A549 (cell line): ENCODE measurements at regions of chr14 and their contacts with region 1.

Region 1: DNA sequence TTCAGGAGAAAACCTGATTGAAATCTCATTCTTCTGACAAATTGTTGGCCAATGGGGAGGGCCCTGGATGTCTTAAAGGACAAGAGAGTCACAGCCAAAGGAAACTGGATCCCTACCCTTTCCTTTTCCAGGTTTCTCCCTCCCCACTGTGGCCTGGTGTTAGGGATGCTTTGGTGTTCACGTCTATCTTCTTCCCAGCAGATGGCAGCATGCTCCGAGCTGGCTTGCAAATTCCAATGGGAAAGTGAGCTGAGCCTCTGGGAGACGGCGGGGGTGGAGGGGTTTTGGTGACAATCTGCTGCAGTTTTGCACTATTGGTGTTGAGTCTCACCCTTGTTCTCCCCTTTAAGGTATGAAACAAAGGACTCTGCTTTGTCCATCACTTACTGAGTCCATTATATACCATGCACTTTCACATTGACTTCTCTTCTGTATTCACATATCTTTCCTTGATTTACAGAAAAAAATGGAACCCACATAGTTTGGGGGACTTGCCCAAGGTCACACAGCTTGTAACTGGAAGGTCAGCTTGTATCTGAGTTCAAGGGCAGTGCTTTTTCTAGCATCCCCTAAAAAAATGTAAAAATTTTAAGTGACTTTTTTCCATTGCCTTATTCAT is 39.3 kb downstream of the CCDC177 start:
- DNase-seq: peak; percentile 58 to 83
- ATAC-seq: peak; percentile 91 to 94
- H3K4me3 ChIP-seq: no peak overlapping the region
- H3K27ac ChIP-seq: no peak overlapping the region
- H3K4me1 ChIP-seq: no peaks in the 10 kb centered on the region
- CTCF ChIP-seq: peak; percentile 80
- EP300 ChIP-seq: no peak
- POLR2A ChIP-seq: no peak
- RAD21 ChIP-seq: peak; percentile 70 to 76

Region 2: DNA sequence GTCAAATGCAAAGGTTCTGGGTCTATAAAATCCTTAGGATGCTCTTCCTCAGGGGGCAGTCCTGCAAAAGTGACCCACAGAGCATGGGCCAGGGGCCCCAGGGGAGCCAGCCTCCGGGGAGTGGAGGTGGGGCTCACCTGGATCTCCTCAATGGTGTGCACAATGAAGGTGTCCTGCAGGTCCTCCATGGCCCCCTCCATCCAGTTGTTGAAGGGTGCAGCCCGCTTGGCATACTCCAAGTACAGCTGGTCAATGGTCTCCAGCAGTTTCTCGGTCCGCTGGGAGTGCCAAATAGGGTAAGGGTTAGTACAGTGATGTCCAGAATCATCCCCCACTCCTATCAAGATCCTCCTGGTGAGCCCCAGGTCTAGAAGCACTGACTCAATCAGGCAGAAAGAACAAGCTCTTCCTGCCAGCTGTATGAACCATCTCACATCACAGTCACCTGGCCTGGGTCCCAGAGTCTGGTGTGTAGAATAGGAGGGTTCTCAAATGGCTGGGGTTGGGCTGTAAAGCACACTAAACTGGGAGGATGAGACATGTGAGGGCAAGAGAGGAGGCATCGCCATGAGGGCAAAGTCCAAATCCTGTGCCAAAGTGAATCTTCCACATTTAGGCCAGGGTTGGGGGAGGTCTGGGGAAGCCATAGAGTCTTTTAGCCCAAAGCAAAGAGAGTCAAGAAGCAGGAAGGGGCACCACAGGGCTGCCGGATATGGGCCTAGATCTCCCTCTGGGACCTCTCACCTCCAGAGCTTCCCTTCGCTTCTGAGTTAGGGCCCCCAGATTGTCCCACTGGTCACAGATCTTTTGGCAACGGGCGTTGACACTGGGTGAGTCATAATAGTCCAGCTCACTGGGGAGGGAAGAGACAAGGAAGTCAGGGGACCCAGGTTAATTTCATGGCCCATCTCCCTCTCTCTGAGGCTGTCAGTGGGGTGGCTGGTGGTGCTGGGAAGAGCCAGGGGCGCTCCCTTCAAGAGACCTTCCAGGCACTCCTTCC is 651.0 kb before region 1 on chr14:
- CTCF ChIA-PET with region 1: no interaction called
- POLR2A ChIA-PET with region 1: no interaction called
- DNase-seq: peak; percentile 79 to 87
- ATAC-seq: peak; percentile 87 to 88
- H3K4me3 ChIP-seq: no peak overlapping the region; the same call in 2 of the 3 replicates
- H3K27ac ChIP-seq: peak overlapping the region; percentile 87 to 90
- H3K4me1 ChIP-seq: peaks cover 34% of the 10 kb centered on the region
- CTCF ChIP-seq: no peak
- EP300 ChIP-seq: peak in 1 of 2 experiments; percentile 32; a peak in 1 of 5 replicates
- POLR2A ChIP-seq: no peak
- RAD21 ChIP-seq: peak; percentile 1 to 11; a peak in 1 of 5 replicates

Region 3: DNA sequence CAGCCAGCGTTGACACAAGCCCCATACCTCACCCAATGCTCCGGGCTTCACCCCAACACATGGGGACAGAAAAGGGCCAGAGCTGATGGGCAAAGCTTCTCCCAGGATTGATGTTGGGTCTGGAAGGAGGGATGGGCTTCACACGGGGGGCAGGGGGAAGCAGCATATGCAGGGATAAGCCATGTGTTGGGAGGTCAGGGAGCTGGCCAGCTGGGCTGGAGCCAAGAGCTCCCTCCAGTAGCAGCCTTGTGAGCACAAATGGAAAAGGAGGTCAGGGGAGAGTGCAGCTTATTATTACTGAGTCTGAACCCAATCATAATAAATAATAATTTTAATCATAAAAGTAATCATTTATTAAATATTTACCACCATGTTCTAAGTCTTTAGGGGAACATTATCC is 41.5 kb before region 1 on chr14:
- CTCF ChIA-PET with region 1: no interaction called
- POLR2A ChIA-PET with region 1: no interaction called
- DNase-seq: no peak
- ATAC-seq: no peak
- H3K4me3 ChIP-seq: no peak overlapping the region
- H3K27ac ChIP-seq: no peak overlapping the region
- H3K4me1 ChIP-seq: no peaks in the 10 kb centered on the region
- CTCF ChIP-seq: no peak
- EP300 ChIP-seq: no peak
- POLR2A ChIP-seq: no peak
- RAD21 ChIP-seq: no peak

Region 4: DNA sequence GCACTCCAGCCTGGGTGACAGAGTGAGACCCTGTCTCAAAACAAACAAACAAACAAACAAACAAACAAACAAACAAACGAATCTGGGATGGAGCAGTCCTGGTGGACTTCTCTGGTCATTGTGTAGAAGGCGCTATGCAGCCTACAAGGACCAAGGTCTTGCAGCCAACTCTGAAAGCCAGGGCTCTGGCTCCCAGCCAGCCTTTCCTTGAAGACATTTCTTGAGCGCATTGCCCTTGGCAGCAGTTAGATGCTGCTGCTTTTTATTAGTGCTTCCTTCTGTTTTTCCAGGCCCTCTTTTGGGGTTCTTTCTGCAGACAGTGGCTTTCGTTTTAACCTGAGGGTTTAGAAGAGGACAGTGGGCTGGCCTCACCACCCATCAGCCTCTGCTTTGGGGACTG is 19.2 kb after region 1 on chr14:
- CTCF ChIA-PET with region 1: interaction called, 10 read pairs
- POLR2A ChIA-PET with region 1: no interaction called
- DNase-seq: no peak
- ATAC-seq: no peak
- H3K4me3 ChIP-seq: no peak overlapping the region
- H3K27ac ChIP-seq: no peak overlapping the region
- H3K4me1 ChIP-seq: peaks cover 9% of the 10 kb centered on the region; the same call in 2 of the 3 replicates
- CTCF ChIP-seq: no peak
- EP300 ChIP-seq: no peak
- POLR2A ChIP-seq: no peak
- RAD21 ChIP-seq: no peak

Region 5: DNA sequence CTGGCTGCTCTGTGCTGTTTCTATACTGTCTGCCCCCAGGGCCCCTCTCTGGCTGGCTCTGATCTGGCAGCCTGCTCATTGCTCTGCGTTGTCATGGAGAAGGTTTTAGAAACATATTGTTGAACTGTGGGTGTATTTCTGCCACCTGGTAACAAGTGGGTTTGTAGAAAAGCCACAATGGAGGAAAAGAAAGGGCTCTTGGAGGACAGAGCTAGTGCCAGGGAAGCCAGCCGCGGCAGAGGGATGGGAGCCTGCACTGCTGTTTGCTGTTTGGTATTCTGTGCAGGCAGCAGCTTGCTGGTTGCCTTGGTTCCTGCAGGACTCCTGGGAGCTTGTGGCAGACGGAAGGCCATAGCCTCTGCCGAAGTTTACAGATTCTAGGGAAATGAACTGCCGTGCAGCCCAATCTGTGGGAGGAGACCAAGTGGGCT is 24.3 kb after region 1 on chr14:
- CTCF ChIA-PET with region 1: interaction called, 15 read pairs
- POLR2A ChIA-PET with region 1: no interaction called
- DNase-seq: no peak
- ATAC-seq: no peak; a peak in 2 of 6 replicates
- H3K4me3 ChIP-seq: no peak overlapping the region
- H3K27ac ChIP-seq: no peak overlapping the region
- H3K4me1 ChIP-seq: no peaks in the 10 kb centered on the region
- CTCF ChIP-seq: no peak
- EP300 ChIP-seq: no peak
- POLR2A ChIP-seq: no peak
- RAD21 ChIP-seq: no peak